Tibial artery (tissue), 4 donors: ENCODE measurements at regions of chr2 and their contacts with region 1.

Region 1: DNA sequence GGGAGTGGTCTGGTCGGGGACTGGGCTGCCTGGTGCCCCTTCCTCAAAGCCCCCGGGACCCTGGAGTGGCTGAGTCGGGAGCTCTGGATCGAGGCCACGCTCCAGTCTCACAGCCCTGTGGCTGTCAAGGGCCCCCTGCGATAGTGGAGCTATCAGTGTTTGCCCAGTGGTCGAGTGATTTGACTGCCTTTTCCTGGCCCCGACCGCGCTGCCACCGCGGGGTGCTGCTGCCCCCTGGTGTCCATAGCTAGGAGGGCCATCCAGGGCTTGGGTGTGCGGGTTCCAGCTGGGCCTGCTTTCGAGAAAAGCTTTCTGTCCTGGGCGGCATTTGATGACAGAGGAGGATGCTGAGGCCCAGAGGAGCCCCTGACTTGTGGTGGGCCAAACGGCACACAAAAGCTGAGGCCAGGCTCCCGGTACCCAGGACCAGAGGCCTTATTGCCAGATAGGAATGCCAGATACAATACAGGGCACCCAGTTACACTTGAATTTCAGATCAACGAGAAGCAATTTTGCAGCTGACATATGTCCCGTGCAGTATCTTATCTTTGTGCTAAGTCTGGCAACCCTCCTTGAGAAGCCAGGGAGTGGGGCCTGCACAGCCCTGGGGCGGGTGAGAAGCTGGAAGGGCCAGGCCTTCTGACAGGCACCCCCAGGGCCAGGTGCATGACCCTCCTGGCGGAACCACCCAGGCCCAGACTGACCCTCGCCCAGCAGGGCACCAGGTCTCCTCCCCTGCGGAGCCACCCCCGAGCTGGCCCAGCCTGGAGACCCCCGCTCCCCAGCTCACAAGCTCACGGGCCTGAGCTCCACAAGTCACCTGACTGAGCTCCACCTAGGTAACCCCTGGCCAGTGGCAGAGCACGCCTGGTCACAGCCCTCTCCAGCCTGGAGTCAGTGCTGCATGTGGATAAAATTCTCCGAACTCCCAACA is 13.0 kb downstream of the ODC1 start:
- DNase-seq: peak in 1 of 2 donors; percentile 49
- H3K4me3 ChIP-seq: no peak overlapping the region
- H3K27ac ChIP-seq: no peak overlapping the region
- H3K4me1 ChIP-seq: peaks cover 0 to 20% (median 10%) of the 10 kb centered on the region in 4 donors
- H3K27me3 ChIP-seq: no peaks in the 10 kb centered on the region
- CTCF ChIP-seq: peak; percentile 98

Region 2: DNA sequence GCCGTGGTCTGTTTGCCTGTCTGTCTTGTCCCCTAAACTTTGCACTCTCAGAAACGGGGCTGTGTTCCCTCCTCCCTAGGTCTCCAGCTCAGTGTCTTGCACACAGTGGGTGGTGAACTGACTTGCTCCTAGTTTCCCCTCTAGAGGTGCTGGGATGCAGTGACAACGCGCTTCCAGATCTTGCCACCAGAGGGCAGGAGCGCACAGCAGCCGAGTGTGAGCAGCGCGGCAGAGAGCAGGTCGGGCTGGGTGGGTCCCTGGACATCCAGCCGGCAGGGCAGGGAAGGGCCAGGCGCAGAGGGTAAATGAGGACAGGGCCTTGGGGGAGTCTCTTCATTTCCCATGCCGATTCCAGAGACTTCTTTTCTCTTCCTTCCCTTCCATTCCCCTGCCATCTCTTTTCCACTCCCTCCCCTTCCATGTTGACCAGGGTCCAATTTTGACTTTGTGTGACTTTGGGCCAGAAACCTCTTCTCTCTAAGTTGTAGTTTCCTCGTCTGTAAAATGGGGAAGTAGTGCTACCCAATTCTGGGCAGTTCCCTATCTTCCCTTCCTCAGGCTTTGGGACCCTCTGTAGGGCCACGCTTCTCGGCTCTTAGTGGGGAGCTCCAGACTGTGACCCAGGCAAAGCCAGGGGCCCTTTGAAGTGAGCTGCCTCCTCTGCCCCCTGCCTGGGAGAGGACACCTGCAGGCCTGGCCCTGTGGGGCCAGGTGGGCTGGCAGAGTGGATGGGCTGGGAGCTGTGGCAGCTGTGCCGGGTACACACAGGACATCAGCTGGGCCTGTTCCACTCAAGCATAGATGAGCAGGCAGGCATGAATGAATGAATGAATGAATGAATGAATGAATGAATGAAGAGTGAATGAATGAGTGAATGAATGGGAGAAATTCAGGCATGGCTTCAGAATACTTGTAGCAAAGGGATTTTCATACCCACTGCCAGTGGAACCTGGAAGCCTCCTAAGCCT is 635.2 kb before region 1 on chr2:
- intact Hi-C with region 1: loop called (anchors 10 kb)
- DNase-seq: peak; percentile 81 to 87
- H3K4me3 ChIP-seq: no peak overlapping the region
- H3K27ac ChIP-seq: no peak overlapping the region
- H3K4me1 ChIP-seq: peaks cover 0 to 32% (median 2%) of the 10 kb centered on the region in 4 donors
- H3K27me3 ChIP-seq: no peaks in the 10 kb centered on the region
- CTCF ChIP-seq: peak; percentile 90 to 95

Region 3: DNA sequence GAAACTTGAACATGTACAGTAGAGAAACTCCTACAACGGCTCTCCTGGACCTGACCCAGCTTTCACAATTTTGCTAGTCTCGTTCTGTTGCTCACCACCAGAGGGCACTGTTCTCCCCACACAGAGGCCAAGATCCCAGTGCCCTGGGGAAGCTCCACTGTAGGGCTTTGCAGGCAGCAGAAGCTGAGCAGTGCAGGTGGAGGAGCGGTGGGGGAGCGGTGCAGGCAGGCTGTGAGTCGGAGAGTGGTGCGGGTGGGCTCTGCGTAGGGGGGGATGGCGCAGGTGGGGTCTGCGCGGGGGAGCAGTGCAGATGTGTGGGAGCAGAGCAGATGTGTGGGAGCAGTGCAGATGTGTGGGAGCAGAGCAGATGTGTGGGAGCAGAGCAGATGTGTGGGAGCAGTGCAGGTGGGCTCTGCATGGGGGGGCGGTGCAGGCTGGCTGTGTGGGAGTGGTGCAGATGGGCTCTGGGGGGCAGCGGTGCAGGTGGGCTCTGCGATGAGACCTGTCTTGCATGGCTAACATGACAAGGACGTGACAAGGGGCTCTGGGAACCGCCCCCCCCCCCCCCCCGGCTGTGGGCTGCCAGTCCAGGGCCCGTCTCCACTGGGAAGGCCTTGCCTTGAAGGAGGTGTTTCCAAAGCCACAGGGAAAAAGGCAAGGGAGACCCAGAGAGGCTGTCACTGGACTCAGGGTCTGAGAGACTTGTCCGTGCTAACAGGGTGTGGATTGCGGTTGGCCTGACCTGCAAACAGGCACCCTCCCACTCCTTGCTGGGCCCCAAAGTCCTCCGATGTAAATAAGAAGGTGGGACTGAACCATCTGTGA is 362.3 kb before region 1 on chr2:
- intact Hi-C with region 1: loop called (anchors 2 kb)
- DNase-seq: peak; percentile 84 to 86
- H3K4me3 ChIP-seq: no peak overlapping the region
- H3K27ac ChIP-seq: no peak overlapping the region
- H3K4me1 ChIP-seq: peaks cover 0 to 4% (median 4%) of the 10 kb centered on the region in 4 donors
- H3K27me3 ChIP-seq: no peaks in the 10 kb centered on the region
- CTCF ChIP-seq: peak; percentile 86 to 90

Region 4: GRCh38 chr2:10122386-10123280 is 312.5 kb before region 1 on chr2 and contains the start of gene RRM2:
- intact Hi-C with region 1: loop called (anchors 2 kb)
- DNase-seq: peak; percentile 90 to 94
- H3K4me3 ChIP-seq: peak within 1 kb of the TSS; percentile 48 to 73
- H3K27ac ChIP-seq: no peak within 1 kb of the TSS
- H3K4me1 ChIP-seq: peaks cover 0 to 38% (median 26%) of the 10 kb centered on the region in 4 donors
- H3K27me3 ChIP-seq: peaks cover 0 to 19% of the 10 kb centered on the region in 2 donors
- CTCF ChIP-seq: no peak